Vagina (tissue), 2 donors: ENCODE measurements at regions of chr7 and their contacts with region 1.

Region 1: GRCh38 chr7:101688183-101688831 is 59.2 kb upstream of the MYL10 start:
- DNase-seq: no peak
- H3K4me3 ChIP-seq: peak overlapping the region in 1 of 2 donors; percentile 18
- H3K27ac ChIP-seq: no peak overlapping the region
- H3K4me1 ChIP-seq: peaks cover 11% of the 10 kb centered on the region
- H3K27me3 ChIP-seq: no peaks in the 10 kb centered on the region
- CTCF ChIP-seq: peak; percentile 93 to 96 (median 94)
- POLR2A ChIP-seq: no peak

Region 2: DNA sequence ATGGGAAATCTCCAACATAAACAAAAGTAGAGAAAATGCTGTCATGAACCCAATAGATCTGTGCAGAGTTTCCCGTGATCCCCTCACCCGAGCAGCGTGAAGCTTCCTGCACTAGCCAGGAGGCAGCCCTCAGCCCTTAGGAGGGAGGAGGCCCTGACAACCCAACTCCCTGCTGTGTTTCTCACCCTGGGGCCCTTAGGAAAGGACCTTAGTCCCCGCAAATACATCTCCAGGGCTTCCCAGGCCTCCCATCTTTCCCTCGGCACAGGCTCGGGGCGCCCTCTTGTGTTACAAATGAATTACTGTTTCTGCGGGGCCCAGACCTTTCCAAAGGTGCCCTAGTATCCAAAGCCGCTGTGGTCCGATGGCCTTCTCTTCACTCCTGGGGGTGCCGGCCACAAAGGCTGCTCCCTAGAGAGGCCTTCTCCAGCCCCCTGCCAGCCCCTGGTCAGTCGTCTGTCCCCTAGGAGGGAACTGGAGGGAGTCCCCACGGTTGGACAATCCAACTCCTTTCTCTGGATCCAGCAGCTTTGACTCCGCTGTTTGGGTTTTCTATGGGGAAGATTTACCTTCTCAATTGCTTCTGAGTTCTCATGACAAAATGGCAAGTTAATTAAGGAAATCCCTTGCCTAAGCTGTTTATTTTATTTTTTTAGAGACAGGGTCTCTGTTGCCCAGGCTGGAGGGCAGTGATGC is 548.4 kb after region 1 on chr7:
- intact Hi-C with region 1: loop called (anchors 10 kb)
- DNase-seq: no peak
- H3K4me3 ChIP-seq: no peak overlapping the region
- H3K27ac ChIP-seq: no peak overlapping the region
- H3K4me1 ChIP-seq: no peaks in the 10 kb centered on the region
- H3K27me3 ChIP-seq: no peaks in the 10 kb centered on the region
- CTCF ChIP-seq: peak; percentile 65 to 79 (median 74)
- POLR2A ChIP-seq: no peak

Region 3: DNA sequence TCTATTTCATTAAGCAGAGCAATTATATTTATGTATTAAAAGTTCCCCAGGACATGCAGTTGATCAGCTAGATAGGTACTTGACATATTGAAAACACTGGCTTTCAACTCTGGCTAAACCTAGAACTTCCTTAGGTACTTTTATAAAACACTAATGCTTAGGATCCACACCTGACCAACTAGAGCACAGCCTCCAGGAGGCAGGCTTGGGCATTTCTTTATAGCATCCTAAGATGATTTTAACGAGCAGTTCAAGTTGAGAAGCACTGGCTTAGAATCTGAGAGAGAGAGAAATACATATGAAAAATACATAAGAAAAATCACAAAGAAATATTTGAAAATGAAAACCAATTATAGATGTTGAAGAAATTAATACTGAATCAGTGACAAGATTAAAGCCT is 1736.9 kb after region 1 on chr7:
- intact Hi-C with region 1: no loop called
- DNase-seq: no peak
- H3K4me3 ChIP-seq: no peak overlapping the region
- H3K27ac ChIP-seq: no peak overlapping the region
- H3K4me1 ChIP-seq: no peaks in the 10 kb centered on the region
- H3K27me3 ChIP-seq: no peaks in the 10 kb centered on the region
- CTCF ChIP-seq: no peak
- POLR2A ChIP-seq: no peak